Heart right ventricle (tissue), 16 donors: ENCODE measurements at regions of chr12 and their contacts with region 1.

Region 1: GRCh38 chr12:101839324-101840283 is 8.8 kb upstream of the GNPTAB start:
- DNase-seq: peak in 1 of 2 donors; percentile 74
- ATAC-seq: peak; percentile 34 to 76 (median 54)
- H3K4me3 ChIP-seq: no peak overlapping the region
- H3K27ac ChIP-seq: no peak overlapping the region
- H3K4me1 ChIP-seq: peaks cover 0 to 15% (median 0%) of the 10 kb centered on the region in 9 donors
- H3K27me3 ChIP-seq: peaks cover 0 to 3% (median 0%) of the 10 kb centered on the region in 7 donors
- CTCF ChIP-seq: peak; percentile 76 to 92 (median 87)

Region 2: GRCh38 chr12:101414533-101415119 is 425.0 kb before region 1 on chr12:
- intact Hi-C with region 1: loop called in 6 of 10 experiments (anchors 2 to 10 kb)
- DNase-seq: peak in 1 of 2 donors; percentile 30
- ATAC-seq: no peak
- H3K4me3 ChIP-seq: no peak overlapping the region
- H3K27ac ChIP-seq: no peak overlapping the region
- H3K4me1 ChIP-seq: no peaks in the 10 kb centered on the region
- H3K27me3 ChIP-seq: no peaks in the 10 kb centered on the region
- CTCF ChIP-seq: peak; percentile 22 to 67 (median 58)

Region 3: GRCh38 chr12:101424620-101425019 is 415.0 kb before region 1 on chr12:
- intact Hi-C with region 1: loop called in 6 of 10 experiments (anchors 10 kb)
- DNase-seq: no peak
- ATAC-seq: no peak
- H3K4me3 ChIP-seq: no peak overlapping the region
- H3K27ac ChIP-seq: no peak overlapping the region
- H3K4me1 ChIP-seq: no peaks in the 10 kb centered on the region
- H3K27me3 ChIP-seq: peaks cover 0 to 10% (median 0%) of the 10 kb centered on the region in 7 donors
- CTCF ChIP-seq: no peak

Region 4: GRCh38 chr12:101773650-101774162 is 65.9 kb before region 1 on chr12:
- intact Hi-C with region 1: loop called in 6 of 10 experiments (anchors 2 to 5 kb)
- DNase-seq: peak; percentile 18 to 59
- ATAC-seq: peak; percentile 57 to 83 (median 74)
- H3K4me3 ChIP-seq: no peak overlapping the region
- H3K27ac ChIP-seq: no peak overlapping the region
- H3K4me1 ChIP-seq: peaks cover 0 to 40% (median 10%) of the 10 kb centered on the region in 9 donors
- H3K27me3 ChIP-seq: no peaks in the 10 kb centered on the region
- CTCF ChIP-seq: peak; percentile 89 to 98 (median 95)

Region 5: GRCh38 chr12:101876861-101877815 is 37.5 kb after region 1 on chr12 and contains the start of gene DRAM1:
- intact Hi-C with region 1: loop called in 2 of 10 experiments (anchors 5 kb)
- DNase-seq: peak; percentile 88 to 92
- ATAC-seq: peak; percentile 88 to 96 (median 92)
- H3K4me3 ChIP-seq: peak within 1 kb of the TSS; percentile 41 to 96 (median 78)
- H3K27ac ChIP-seq: peak within 1 kb of the TSS; percentile 72 to 99 (median 97)
- H3K4me1 ChIP-seq: peaks cover 0 to 52% (median 15%) of the 10 kb centered on the region in 9 donors
- H3K27me3 ChIP-seq: no peaks in the 10 kb centered on the region
- CTCF ChIP-seq: peak in 4 of 9 donors; percentile 3 to 29 (median 24)
- total RNA-seq, gene DRAM1: 2.4 to 19.6 (median 3.3) TPM